Cardiac septum (tissue), 1 donor: ENCODE measurements at regions of chr9 and their contacts with region 1.

Region 1: GRCh38 chr9:98881836-98882568 is 61.7 kb upstream of the COL15A1 start:
- DNase-seq: peak; percentile 49

Region 2: GRCh38 chr9:98807070-98807810 is 74.8 kb before region 1 on chr9 and contains the start of gene GALNT12:
- intact Hi-C with region 1: no loop called
- DNase-seq: no peak
- total RNA-seq, gene GALNT12: 0.38 TPM

Region 3: DNA sequence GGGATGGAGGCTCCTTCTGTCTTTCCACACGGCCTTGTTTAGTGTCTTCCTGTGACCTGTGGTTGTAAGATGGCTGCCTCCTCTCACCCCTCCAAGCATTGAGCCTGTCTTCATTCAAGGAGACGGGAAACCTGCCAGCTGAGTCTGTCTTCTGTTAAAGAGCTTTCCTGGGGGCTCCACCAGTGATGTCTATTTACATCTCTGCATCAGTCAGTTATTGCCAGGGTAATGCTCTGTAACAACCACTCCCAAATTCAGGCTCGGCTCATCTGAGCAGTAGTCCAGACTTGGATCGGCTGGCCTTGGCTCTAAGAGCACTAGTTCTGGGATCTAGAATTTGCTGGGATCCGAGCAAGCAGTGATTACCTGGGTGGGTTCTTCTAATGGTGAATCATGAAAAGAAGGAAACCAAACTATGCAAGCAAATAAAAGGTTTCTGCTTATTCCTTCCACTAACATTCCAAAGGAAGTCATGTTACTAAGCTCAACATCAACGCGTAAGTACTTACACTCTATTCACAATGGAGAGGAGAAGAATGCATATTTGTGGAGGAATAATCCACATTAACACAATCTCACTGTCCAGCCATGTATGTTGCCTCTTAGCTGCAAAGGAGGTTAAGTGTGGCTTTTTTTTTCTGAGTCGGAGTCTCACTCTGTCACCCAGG is 12.8 kb before region 1 on chr9:
- intact Hi-C with region 1: loop called (anchors 1 kb)
- DNase-seq: peak; percentile 20